Posterior cingulate gyrus (tissue), 11 donors: ENCODE measurements at regions of chr12 and their contacts with region 1.

Region 1: DNA sequence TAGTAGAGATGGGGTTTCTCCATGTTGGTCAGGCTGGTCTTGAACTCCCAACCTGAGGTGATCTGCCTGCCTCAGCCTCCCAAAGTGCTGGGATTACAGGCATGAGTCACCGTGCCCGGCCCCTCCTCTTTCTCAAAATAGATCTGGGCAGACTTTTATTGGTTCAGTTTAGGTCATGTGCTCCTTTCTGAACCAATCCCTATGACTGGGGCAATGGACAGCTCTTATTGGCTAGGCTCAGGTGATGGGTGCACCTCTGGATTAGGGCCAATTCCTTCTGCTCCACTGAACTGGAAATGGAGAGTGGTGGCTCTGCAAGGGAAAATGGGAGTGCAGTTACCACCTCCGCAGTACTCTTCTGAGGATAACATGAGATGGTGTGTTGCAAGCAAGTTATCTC is 6.2 kb upstream of the ATP6V0A2 start:
- DNase-seq: no peak

Region 2: GRCh38 chr12:123670882-123671728 is 34.8 kb before region 1 on chr12 and contains the start of gene TCTN2:
- intact Hi-C with region 1: loop called (anchors 5 kb)
- DNase-seq: peak; percentile 92 to 99 (median 96)

Region 3: GRCh38 chr12:123757561-123757960 is 51.6 kb after region 1 on chr12:
- intact Hi-C with region 1: no loop called
- DNase-seq: no peak